Gastrocnemius medialis (tissue), 4 donors: ENCODE measurements at regions of chr7 and their contacts with region 1.

Region 1: GRCh38 chr7:44921607-44922359 is 36.5 kb upstream of the PURB start:
- DNase-seq: peak; percentile 71 to 83
- ATAC-seq: peak; percentile 95 to 99
- H3K4me3 ChIP-seq: no peak overlapping the region
- H3K27ac ChIP-seq: no peak overlapping the region
- H3K4me1 ChIP-seq: no peaks in the 10 kb centered on the region
- H3K27me3 ChIP-seq: no peaks in the 10 kb centered on the region
- CTCF ChIP-seq: peak; percentile 81 to 93 (median 88)
- POLR2A ChIP-seq: no peak

Region 2: DNA sequence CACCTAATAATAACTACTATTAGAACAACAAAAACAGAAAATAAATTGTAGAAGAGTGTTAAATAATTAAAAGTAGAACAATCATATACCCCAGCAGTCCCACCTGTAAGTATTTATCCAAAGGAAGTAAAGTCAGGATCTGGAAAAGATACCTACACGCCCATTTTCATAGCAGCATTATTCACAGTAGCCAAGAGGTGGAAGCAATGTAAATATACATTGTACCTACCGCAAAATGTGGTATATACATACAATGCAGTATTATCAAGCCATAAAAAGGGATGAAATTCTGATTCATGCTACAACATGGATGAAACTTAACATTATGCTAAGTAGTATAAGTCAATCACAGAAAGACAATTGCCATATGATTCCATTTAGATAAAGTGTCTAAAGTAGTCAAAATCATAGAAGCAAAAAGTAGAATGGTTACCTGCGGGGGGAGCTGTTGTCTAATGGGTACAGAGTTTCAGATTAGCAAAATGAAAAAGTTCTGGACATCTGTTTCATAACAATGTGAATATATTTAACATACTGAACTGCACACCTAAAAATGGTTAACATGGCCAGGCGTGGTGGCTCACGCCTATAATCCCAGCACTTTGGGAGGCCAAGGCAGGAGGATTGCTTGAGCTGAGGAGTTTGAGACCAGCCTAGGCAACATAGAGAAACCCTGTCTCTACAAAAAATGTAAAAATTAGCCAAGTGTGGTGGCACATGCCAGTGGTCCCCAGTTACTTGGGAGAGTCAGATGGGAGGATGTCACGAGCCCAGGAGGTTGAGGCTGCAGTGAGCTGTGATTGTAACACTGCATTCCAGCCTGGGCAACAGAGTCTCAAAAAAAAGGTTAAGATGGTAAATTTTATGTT is 333.7 kb before region 1 on chr7:
- in situ Hi-C with region 1: loop called in 3 of 4 experiments (anchors 10 kb)
- intact Hi-C with region 1: loop called (anchors 5 kb)
- DNase-seq: no peak
- ATAC-seq: peak; percentile 84 to 88
- H3K4me3 ChIP-seq: no peak overlapping the region
- H3K27ac ChIP-seq: peak overlapping the region in 2 of 4 donors; percentile 17 to 41
- H3K4me1 ChIP-seq: peaks cover 0 to 9% of the 10 kb centered on the region in 2 donors
- H3K27me3 ChIP-seq: no peaks in the 10 kb centered on the region
- CTCF ChIP-seq: peak; percentile 58 to 77 (median 68)
- POLR2A ChIP-seq: no peak

Region 3: GRCh38 chr7:44595934-44596635 is 325.7 kb before region 1 on chr7:
- in situ Hi-C with region 1: loop called in 1 of 4 experiments (anchors 10 kb)
- intact Hi-C with region 1: no loop called
- DNase-seq: peak in 1 of 2 donors; percentile 56
- ATAC-seq: peak; percentile 98 to 99
- H3K4me3 ChIP-seq: no peak overlapping the region
- H3K27ac ChIP-seq: peak overlapping the region; percentile 77 to 88 (median 83)
- H3K4me1 ChIP-seq: peaks cover 10 to 15% of the 10 kb centered on the region in 2 donors
- H3K27me3 ChIP-seq: no peaks in the 10 kb centered on the region
- CTCF ChIP-seq: no peak
- POLR2A ChIP-seq: peak; percentile 53 to 57

Region 4: GRCh38 chr7:44858161-44858560 is 63.6 kb before region 1 on chr7:
- in situ Hi-C with region 1: loop called (anchors 5 kb)
- intact Hi-C with region 1: loop called (anchors 1 kb)
- DNase-seq: no peak
- ATAC-seq: no peak
- H3K4me3 ChIP-seq: no peak overlapping the region
- H3K27ac ChIP-seq: no peak overlapping the region
- H3K4me1 ChIP-seq: no peaks in the 10 kb centered on the region
- H3K27me3 ChIP-seq: no peaks in the 10 kb centered on the region
- CTCF ChIP-seq: no peak
- POLR2A ChIP-seq: no peak

Region 5: GRCh38 chr7:44867073-44867995 is 54.4 kb before region 1 on chr7:
- in situ Hi-C with region 1: loop called in 2 of 4 experiments (anchors 5 kb)
- intact Hi-C with region 1: no loop called
- DNase-seq: peak; percentile 71 to 80
- ATAC-seq: peak; percentile 100
- H3K4me3 ChIP-seq: no peak overlapping the region
- H3K27ac ChIP-seq: peak overlapping the region; percentile 78 to 87 (median 82)
- H3K4me1 ChIP-seq: peaks cover 14 to 17% of the 10 kb centered on the region in 2 donors
- H3K27me3 ChIP-seq: no peaks in the 10 kb centered on the region
- CTCF ChIP-seq: no peak
- POLR2A ChIP-seq: no peak

Region 6: GRCh38 chr7:45033261-45033930 is 111.6 kb after region 1 on chr7:
- in situ Hi-C with region 1: no loop called
- intact Hi-C with region 1: no loop called
- DNase-seq: no peak
- ATAC-seq: peak in 1 of 2 donors; percentile 28
- H3K4me3 ChIP-seq: no peak overlapping the region
- H3K27ac ChIP-seq: peak overlapping the region in 2 of 4 donors; percentile 51 to 55
- H3K4me1 ChIP-seq: peaks cover 12% of the 10 kb centered on the region in 2 donors
- H3K27me3 ChIP-seq: no peaks in the 10 kb centered on the region
- CTCF ChIP-seq: no peak
- POLR2A ChIP-seq: no peak

Region 7: DNA sequence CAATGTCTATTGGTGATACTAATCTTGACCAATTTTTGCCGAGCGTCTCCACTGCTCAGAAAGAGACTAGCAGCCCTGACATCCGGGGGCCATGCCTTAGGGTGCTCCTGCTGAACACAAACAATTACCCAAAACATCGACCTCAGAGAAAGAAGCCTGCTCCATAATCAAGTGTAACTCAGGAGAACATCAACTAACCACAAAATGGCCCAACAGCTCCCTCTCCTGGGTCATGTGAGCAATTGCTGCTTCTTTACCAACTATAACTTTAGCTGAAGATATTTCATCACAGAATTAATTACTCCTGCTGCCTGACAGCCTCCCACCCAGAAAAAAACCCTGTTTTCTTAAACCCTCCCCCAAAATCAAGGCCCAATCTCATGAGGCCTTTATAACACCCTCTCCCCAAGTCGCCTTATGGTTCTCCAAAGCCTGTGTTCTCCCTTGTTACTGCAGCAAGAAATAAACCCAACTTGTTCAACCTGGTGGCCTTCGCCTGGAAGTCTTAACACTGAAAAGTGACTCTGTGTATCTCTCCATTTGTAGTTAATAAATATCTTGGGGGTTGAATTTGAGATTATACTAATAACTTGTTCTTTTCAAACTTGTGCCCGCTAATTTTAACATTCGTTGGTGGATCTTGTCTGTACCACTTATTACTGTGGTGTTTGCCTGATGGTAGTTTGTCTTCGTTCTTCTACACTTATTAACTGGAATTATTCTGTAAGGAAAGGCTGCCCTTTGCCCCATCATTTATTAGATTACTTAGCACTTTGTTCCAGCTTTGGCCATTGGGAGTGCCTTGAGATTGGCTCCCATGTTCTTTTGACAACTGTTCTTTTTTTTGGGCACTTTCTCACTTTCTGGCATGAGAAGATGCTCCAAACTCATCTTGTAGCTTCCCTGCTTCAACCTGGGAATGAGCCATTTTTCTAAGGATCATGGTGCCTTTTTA is 214.6 kb after region 1 on chr7:
- in situ Hi-C with region 1: loop called in 1 of 4 experiments (anchors 10 kb)
- intact Hi-C with region 1: no loop called
- DNase-seq: peak; percentile 26 to 34
- ATAC-seq: peak; percentile 86 to 96
- H3K4me3 ChIP-seq: no peak overlapping the region
- H3K27ac ChIP-seq: no peak overlapping the region
- H3K4me1 ChIP-seq: no peaks in the 10 kb centered on the region
- H3K27me3 ChIP-seq: no peaks in the 10 kb centered on the region
- CTCF ChIP-seq: peak; percentile 70 to 84 (median 79)
- POLR2A ChIP-seq: no peak